MCF 10A (cell line): ENCODE measurements at regions of chr1 and their contacts with region 1.

Region 1: GRCh38 chr1:65020774-65021173 is 54.4 kb upstream of the JAK1 start:
- DNase-seq: peak; percentile 30
- H3K4me3 Mint-ChIP-seq: no peak overlapping the region
- H3K27ac Mint-ChIP-seq: no peak overlapping the region
- H3K4me1 Mint-ChIP-seq: no peaks in the 10 kb centered on the region
- H3K27me3 Mint-ChIP-seq: no peaks in the 10 kb centered on the region
- CTCF ChIP-seq: peak; percentile 23

Region 2: DNA sequence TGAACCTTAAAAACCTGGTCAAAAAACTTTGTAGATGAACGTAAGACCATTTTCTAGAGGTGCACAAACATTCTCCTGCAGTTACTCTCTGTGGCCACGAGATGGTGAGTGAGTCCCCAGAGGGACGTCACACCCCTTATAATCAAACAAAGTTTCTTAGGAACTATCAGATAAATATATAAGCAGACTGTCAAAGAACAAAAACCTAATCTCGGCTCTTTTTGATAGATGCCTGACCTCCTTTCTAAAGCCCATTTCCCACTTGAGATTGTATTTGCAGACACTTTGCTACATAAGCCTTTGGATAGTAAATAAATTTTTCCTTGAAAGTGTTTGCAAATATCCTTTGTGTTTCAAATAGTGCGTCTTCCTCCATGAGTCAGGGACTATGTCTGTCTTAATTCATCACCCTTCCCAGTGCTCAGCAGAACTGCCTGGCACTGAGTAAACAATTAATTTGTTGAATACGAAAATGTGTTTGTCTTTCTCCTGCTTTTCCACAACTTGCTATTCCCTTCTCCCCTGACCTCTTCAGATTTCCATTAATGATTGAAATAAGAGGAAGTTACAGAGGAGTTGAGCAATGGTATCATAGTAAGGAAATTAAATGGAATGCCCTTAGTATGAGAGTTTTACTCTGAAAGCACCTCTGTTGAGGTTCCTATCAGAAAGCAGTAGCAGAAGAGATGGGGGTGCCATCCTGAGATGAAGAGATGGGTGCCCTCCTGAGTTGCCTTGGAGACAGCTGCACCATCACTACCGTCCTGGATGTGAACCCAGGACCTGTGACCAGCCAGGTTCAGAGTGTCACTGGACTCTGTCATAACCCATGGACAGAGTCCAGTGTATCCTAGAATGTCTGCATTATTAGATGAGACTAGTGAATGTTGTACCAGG is 333.7 kb before region 1 on chr1:
- CTCF ChIA-PET with region 1: no interaction called
- POLR2A ChIA-PET with region 1: no interaction called
- intact Hi-C with region 1: loop called (anchors 5 kb)
- DNase-seq: peak; percentile 71
- H3K4me3 Mint-ChIP-seq: no peak overlapping the region
- H3K27ac Mint-ChIP-seq: no peak overlapping the region
- H3K4me1 Mint-ChIP-seq: peaks cover 19% of the 10 kb centered on the region
- H3K27me3 Mint-ChIP-seq: no peaks in the 10 kb centered on the region
- CTCF ChIP-seq: peak; percentile 57

Region 3: GRCh38 chr1:64744492-64745180 is 276.1 kb before region 1 on chr1 and contains the start of gene RAVER2:
- CTCF ChIA-PET with region 1: no interaction called
- POLR2A ChIA-PET with region 1: no interaction called
- intact Hi-C with region 1: loop called (anchors 10 kb)
- DNase-seq: peak; percentile 79
- H3K4me3 Mint-ChIP-seq: peak within 1 kb of the TSS; percentile 80
- H3K27ac Mint-ChIP-seq: peak within 1 kb of the TSS; percentile 31
- H3K4me1 Mint-ChIP-seq: peaks cover 21% of the 10 kb centered on the region
- H3K27me3 Mint-ChIP-seq: no peaks in the 10 kb centered on the region
- CTCF ChIP-seq: peak; percentile 53
- total RNA-seq, gene RAVER2: 5.3 and 5.9 TPM in 2 replicates

Region 4: DNA sequence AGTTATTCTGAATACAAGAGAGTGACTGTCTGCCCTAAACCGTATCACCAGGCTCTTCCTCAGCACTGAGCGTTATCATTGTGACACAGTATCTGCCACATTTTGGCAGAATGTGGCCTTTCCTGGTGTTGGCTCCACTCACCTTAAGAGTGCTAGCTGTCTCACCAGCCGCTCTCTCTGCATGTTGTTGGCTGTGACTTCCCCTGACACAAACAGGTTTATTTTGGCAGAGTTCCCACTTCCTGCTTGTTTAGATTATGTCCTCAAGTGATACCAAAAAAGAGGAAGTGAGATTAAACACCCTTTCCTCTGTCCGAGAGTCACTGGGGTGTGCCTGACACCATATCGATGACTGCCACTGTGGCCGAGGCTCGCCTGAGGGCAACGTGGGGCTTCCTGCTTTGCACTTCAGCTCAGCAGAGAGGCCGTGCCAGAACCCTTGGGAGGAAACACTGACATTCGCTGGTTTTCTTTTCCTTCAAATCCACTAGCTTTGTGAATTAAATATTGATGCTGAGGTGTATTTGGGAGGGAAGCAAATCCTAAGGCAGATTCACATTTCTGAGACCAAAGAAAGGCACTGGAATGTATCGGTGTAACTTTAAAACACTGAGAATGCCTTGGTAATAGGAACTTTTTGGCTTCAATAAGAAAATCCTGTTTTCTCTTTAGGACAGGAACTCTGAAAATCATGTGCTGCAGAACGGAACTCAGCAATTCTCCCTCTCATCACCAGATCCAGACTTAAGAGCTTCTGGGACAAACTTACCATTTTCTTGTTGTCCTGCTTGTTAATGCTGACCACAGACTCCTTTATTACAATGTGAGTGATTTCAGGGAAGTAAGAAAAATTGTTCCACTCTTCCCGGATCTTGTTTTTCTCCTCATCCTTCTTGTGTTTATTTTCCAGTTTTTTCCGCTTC is 156.5 kb before region 1 on chr1:
- CTCF ChIA-PET with region 1: interaction called, 3 read pairs
- POLR2A ChIA-PET with region 1: no interaction called
- intact Hi-C with region 1: loop called (anchors 10 kb)
- DNase-seq: peak; percentile 55
- H3K4me3 Mint-ChIP-seq: no peak overlapping the region
- H3K27ac Mint-ChIP-seq: no peak overlapping the region
- H3K4me1 Mint-ChIP-seq: no peaks in the 10 kb centered on the region
- H3K27me3 Mint-ChIP-seq: no peaks in the 10 kb centered on the region
- CTCF ChIP-seq: no peak

Region 5: DNA sequence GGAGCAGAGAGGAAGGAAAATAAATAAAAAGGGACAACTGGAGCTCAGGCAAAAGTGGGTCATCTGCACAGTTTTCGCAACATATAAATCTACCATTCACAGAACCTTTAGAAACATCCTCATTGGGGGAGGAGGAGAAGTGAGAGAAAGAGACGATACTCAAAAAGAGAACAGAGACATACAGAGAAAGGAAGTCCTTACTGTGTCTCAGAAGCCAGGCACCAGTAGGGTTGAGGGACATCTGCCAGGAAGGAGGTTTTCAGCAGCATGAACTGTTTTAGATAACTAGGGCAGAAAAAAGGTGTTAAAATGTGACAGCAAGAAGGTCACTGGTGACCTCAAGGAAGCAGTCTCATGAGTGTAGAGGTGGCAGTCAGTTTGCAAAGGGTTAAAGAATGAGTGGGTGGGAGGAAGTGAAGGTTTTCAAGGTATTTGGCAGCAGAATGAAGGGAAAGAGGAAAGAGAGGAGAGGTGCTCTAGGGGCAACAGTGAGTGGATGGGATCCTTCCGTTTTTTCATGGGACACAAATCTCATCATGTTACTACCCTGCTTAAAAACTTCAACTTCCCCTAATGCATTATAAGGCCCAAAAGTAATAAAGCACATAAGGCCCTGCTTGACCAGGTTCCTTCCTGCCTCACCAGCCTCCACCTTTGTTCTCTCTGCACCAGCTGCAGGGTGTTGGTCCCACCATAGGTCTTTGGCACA is 63.9 kb before region 1 on chr1:
- CTCF ChIA-PET with region 1: no interaction called
- POLR2A ChIA-PET with region 1: no interaction called
- intact Hi-C with region 1: no loop called
- DNase-seq: no peak
- H3K4me3 Mint-ChIP-seq: no peak overlapping the region
- H3K27ac Mint-ChIP-seq: no peak overlapping the region
- H3K4me1 Mint-ChIP-seq: peaks cover 22% of the 10 kb centered on the region
- H3K27me3 Mint-ChIP-seq: no peaks in the 10 kb centered on the region
- CTCF ChIP-seq: no peak

Region 6: DNA sequence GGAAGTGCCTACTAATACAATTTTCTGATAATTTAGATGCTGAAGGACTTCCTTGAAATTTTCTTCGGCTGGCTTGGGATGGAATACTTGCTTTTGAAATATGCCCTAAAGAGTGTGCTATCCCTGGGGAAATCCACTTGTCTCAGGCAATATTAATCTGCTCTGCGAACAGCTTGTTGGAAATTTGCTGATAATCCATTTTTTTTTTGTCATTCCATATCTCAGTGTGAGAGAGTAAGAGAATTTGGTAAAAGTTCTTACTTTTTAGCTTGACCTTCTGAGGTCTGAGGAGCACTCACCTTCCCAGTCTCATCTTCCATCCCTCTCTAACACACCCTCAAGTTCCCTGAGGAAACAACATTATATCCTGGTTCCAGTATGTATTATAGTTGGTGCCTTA is 325.4 kb after region 1 on chr1:
- CTCF ChIA-PET with region 1: no interaction called
- POLR2A ChIA-PET with region 1: no interaction called
- intact Hi-C with region 1: no loop called
- DNase-seq: no peak
- H3K4me3 Mint-ChIP-seq: no peak overlapping the region
- H3K27ac Mint-ChIP-seq: no peak overlapping the region
- H3K4me1 Mint-ChIP-seq: peaks cover 26% of the 10 kb centered on the region
- H3K27me3 Mint-ChIP-seq: no peaks in the 10 kb centered on the region
- CTCF ChIP-seq: no peak